Dorsolateral prefrontal cortex (tissue), 120 donors: ENCODE measurements at regions of chr2 and their contacts with region 1.

Region 1: GRCh38 chr2:173965329-173966025 is at the start of gene SP3:
- DNase-seq: peak; percentile 92 to 97 (median 96)
- H3K4me3 ChIP-seq: peak within 1 kb of the TSS; percentile 65 to 100 (median 94)
- H3K27ac ChIP-seq: peak within 1 kb of the TSS; percentile 98 to 100 (median 100)
- H3K27me3 ChIP-seq: no peaks in the 10 kb centered on the region
- CTCF ChIP-seq: peak in 14 of 56 donors; percentile 5 to 32 (median 16)
- total RNA-seq, gene SP3: 41.4 to 79.2 (median 59.4) TPM

Region 2: DNA sequence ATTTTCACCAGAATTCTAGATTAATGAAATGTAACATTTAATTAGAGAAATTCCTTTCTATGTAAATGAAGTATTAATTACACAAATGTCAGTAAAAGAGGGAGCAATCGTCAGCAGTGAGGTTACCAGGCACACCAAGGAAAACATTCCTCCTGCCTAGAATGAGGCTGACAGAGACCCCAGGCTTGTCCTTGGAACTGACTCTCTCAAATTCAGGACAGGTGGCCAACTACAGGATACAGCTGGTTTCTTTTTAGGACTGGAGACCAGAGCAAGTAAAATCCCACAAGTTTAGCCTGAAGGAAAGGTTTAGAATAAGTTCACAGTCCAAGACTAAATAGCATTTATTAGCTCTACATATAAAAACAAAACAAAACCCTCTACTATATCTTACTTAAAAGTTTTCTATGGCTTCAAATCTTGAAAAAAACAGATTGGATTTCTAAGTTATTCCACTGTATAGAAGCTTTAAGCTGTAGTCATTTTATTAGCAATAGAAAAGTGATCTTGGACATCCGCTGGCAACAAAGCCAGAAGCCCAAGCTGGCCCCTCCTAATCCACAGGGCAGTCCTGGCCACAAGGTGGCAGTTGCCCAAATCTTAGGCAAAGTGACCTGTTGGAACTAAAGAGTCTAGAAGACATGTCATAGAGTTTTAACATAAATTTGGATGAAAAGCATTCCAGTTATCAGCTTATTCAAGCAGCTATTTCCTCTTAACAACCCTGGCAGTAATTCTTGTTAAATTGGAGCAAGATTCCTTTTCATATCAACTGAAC is 81.3 kb before region 1 on chr2:
- intact Hi-C with region 1: loop called in 1 of 2 experiments (anchors 10 kb)
- DNase-seq: peak in 3 of 10 donors; percentile 12 to 48 (median 28)
- H3K4me3 ChIP-seq: no peak overlapping the region
- H3K27ac ChIP-seq: no peak overlapping the region
- H3K27me3 ChIP-seq: peaks cover 0 to 8% (median 0%) of the 10 kb centered on the region in 45 donors
- CTCF ChIP-seq: peak in 54 of 56 donors; percentile 27 to 76 (median 55)

Region 3: DNA sequence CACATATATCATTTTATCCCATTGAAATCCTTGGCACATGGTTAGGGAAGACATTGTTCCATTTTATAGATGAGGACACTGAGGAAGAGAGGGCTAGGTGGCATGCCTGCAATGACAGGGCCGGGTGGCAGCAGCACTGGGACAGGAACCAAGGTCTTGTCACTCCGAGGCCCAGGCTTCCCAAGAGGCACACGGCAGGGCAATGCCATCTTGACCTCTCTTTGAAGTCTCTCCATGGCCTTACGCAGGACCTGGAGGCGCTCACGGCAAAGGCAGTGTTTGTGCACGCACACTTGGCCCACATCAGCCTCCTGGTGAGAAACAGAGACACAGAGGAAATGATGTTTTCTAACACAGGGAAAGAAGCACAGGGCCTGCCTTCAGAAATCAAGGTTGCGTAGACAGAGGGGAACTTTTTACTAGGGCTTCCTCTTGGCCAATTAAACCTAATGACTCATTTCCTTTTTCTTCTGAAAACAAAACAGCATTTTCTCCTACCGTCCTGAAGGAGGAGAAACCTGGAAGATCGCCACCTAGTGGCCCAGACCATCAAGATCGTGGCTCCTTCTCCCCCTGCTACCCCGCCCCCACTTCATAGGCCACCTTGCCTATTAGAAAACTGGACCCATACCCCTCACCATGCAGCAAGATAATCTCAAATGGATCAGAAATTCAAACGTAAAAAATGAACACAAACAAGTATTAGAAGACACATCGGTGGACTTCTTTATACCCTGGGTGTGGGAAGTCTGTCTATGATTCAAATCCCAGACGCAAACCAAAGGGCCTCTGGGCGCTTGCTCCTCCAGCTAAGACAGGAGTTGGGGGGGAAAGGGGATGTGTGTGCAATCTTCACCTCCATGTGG is 74.3 kb after region 1 on chr2:
- intact Hi-C with region 1: loop called (anchors 5 kb)
- DNase-seq: peak; percentile 55 to 80 (median 70)
- H3K4me3 ChIP-seq: peak overlapping the region in 50 of 59 donors; percentile 1 to 59 (median 32)
- H3K27ac ChIP-seq: peak overlapping the region in 50 of 59 donors; percentile 3 to 88 (median 61)
- H3K27me3 ChIP-seq: peaks cover 0 to 3% (median 0%) of the 10 kb centered on the region in 45 donors
- CTCF ChIP-seq: peak; percentile 72 to 91 (median 84)

Region 4: DNA sequence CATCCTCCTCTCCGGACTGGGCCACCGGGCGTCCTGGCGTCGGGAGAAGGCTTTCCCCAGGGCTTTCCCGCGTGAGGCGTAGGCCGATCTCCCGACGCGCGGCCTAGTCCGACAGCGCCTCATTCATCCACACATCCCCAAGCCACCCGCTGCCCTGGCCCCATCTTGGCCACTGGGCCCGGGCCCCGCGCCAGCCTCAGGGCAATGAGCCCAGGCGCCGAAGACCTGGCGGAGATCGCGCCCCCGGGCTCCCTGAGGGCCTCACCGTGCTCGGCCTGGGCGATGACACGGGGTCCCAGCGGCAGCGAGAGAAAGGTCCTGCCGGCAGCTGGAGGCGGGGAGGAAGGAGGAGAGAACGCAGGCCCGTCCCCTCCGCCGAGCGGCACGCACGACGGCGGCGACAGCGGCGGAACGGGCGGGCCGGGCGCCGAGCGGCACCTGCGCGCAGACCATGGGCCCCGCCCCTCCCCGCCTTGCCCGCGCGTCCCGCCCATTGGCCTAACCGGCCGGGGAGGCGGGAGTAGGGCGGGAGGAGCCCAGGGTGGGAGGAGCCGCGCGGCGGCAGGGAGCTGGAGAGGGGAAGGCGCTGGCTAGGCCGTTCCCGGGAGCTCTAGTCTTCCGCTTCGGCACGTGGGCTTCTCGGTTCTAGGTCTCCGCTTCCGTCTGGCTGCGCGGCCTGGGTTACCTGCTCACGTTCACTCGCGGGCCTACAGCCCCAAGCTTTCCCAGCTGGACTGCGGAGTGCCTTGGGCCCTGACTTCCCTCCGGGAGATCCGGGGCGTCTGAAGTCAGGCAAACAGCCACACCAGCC is 282.9 kb after region 1 on chr2 and contains the start of gene OLA1:
- intact Hi-C with region 1: loop called (anchors 2 to 5 kb)
- DNase-seq: peak; percentile 82 to 97 (median 92)
- H3K4me3 ChIP-seq: peak within 1 kb of the TSS; percentile 60 to 97 (median 88)
- H3K27ac ChIP-seq: peak within 1 kb of the TSS in 56 of 59 donors; percentile 17 to 93 (median 79)
- H3K27me3 ChIP-seq: no peaks in the 10 kb centered on the region
- CTCF ChIP-seq: peak in 26 of 56 donors; percentile 3 to 53 (median 24)
- total RNA-seq, gene OLA1: 32.9 to 139 (median 93.6) TPM